ENCODE measurements at regions of chr10 and their contacts with region 1.

Region 1: DNA sequence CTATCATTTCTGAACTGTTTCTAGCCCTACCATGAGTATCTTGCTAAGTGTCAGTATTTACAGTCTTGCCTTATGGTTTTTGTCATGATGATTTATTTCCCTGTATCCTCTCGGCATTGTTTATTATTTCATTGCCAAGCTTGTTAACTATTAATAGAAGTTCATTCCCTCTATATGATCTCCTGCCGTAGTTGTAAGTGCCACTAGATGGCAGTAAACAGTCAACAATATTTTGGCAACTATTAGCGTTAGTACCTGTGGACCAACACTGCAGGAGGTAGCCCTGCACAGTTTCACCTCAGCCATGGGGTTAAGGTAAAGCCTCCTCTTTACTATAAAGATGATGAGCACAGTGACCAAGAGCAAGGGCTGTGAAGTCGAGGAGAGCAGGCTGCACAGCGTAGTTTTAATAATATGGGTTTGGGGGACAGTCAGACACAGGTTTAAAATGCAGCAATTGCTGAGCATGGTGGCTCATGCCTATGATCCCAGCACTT is 26.1 kb upstream of the CCNJ start:
- DNase-seq: peak; percentile 45
- ATAC-seq: peak; percentile 92
- H3K4me3 Mint-ChIP-seq: no peak overlapping the region
- H3K27ac Mint-ChIP-seq: no peak overlapping the region
- H3K4me1 Mint-ChIP-seq: no peaks in the 10 kb centered on the region
- H3K27me3 Mint-ChIP-seq: no peaks in the 10 kb centered on the region
- CTCF ChIP-seq: peak; percentile 77

Region 2: GRCh38 chr10:96034625-96035024 is 17.4 kb after region 1 on chr10:
- CTCF ChIA-PET with region 1: interaction called, 18 read pairs
- POLR2A ChIA-PET with region 1: no interaction called
- intact Hi-C with region 1: no loop called
- DNase-seq: no peak
- ATAC-seq: no peak
- H3K4me3 Mint-ChIP-seq: no peak overlapping the region
- H3K27ac Mint-ChIP-seq: no peak overlapping the region
- H3K4me1 Mint-ChIP-seq: no peaks in the 10 kb centered on the region
- H3K27me3 Mint-ChIP-seq: peaks cover 6% of the 10 kb centered on the region
- CTCF ChIP-seq: no peak

Region 3: DNA sequence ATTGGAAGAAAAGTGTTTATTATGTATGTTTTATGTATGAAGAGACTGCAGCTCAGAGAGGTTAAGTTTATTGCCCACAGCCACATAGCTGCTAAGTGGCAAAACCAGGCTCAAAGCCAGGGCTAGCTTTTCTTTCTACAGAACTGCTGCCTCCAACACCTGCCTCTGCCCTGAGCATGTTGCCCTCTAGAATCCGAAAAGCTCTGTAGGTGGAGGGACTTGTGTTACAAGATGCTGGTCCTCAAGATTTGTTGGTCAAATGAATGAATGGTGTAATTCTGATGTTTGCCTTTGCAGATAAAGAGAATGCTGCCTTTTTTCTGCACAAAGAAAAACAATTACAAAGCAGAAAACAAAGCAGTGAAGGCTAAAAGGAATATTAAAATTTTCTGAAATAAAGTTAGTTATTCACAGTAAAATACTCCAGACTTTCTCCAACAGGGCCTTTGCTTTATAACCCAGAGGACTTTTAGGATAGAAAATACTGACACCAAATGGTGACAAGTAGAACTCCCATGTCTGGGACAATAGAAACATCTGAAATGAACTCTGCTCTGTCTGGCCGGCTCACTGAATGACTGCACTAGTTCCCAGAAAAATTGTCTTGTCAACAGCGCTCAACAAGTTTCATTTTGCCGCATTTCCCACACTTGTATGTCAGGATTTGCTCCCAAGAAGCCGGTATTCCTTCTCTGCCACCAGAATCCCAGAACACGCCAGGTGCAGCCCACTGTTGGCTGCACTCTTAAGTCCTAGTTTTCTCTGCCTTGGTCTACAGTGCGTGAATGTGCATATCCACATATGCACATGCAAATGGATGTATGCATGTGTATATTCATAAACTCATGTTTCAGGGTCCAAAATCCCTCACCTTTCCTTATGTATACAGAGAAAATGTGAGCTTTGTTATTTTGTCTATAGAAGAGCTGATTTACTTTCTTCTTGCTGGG is 276.0 kb after region 1 on chr10:
- CTCF ChIA-PET with region 1: interaction called, 15 read pairs
- POLR2A ChIA-PET with region 1: no interaction called
- intact Hi-C with region 1: loop called (anchors 10 kb)
- DNase-seq: no peak
- ATAC-seq: peak; percentile 76
- H3K4me3 Mint-ChIP-seq: no peak overlapping the region
- H3K27ac Mint-ChIP-seq: no peak overlapping the region
- H3K4me1 Mint-ChIP-seq: peaks cover 21% of the 10 kb centered on the region
- H3K27me3 Mint-ChIP-seq: peaks cover 5% of the 10 kb centered on the region
- CTCF ChIP-seq: peak; percentile 48

Region 4: DNA sequence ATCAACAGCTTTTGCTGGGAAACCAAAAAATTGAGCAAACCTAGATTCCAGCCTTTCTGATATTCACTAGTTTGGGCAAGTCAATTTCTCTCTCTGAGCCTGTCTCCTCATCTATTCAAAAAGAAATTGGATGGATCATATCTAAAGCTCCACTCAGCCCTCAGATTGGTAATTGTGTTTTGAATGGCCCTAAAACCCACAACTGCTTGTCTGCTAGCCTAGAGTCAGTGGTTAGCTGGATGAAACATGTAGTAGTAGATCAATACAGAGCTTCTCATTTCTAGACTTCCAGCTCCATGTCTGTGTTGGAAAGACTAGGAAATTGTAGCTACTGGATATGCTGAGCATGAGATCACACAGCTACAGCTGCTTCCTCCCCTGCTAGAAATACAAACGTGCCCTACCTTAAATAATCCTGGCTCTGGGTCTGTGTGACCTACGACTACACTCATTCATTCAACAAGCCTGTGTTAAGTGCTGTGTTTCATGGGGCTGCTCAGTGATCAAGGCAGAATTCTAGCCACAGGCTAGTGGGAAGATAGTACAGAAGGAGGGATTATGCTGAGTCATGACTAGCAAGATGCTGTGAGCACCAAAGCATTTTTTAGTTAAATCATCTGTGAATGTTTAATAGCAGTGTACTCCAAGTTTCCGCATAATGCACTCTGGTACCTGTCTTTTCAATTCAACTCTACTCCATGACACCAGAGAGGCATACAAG is 302.7 kb after region 1 on chr10:
- CTCF ChIA-PET with region 1: interaction called, 12 read pairs
- POLR2A ChIA-PET with region 1: interaction called, 3 read pairs
- intact Hi-C with region 1: no loop called
- DNase-seq: no peak
- ATAC-seq: no peak
- H3K4me3 Mint-ChIP-seq: no peak overlapping the region
- H3K27ac Mint-ChIP-seq: peak overlapping the region; percentile 7
- H3K4me1 Mint-ChIP-seq: no peaks in the 10 kb centered on the region
- H3K27me3 Mint-ChIP-seq: peaks cover 10% of the 10 kb centered on the region
- CTCF ChIP-seq: no peak

Region 5: GRCh38 chr10:96339957-96340904 is 323.0 kb after region 1 on chr10:
- CTCF ChIA-PET with region 1: interaction called, 22 read pairs
- POLR2A ChIA-PET with region 1: no interaction called
- intact Hi-C with region 1: loop called (anchors 2 kb)
- DNase-seq: peak; percentile 81
- ATAC-seq: peak; percentile 88
- H3K4me3 Mint-ChIP-seq: no peak overlapping the region
- H3K27ac Mint-ChIP-seq: no peak overlapping the region
- H3K4me1 Mint-ChIP-seq: no peaks in the 10 kb centered on the region
- H3K27me3 Mint-ChIP-seq: no peaks in the 10 kb centered on the region
- CTCF ChIP-seq: peak; percentile 84

Measured in activated CD8-positive, alpha-beta T cell treated with anti-CD3 and anti-CD28 coated beads for 36 hours (primary cell).